ENCODE measurements at regions of chr3 and their contacts with region 1.

Region 1: DNA sequence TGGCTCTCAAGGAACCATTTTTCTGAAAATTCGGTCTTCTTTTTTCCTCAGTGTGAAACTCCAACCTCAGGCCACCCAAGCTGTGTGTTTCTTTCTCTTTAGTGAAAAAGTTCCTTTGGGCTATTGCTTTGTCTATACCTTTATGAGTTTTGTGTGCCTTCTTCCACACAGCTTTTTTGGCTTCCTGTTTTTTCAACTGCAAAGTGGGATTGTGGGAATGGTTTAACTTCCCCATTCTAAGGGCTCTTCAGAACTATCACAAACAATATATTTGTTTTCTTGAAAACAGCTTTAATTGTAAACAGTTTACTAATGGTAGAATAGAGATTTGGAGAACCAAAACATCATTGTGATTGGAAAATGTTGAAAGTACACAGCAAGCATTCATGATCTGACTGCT is 10.4 kb downstream of the SYN2 start:
- DNase-seq: no peak
- ATAC-seq: no peak
- H3K4me3 ChIP-seq: no peak overlapping the region
- H3K4me3 Mint-ChIP-seq: no peak overlapping the region
- H3K27ac ChIP-seq: no peak overlapping the region
- H3K27ac Mint-ChIP-seq: no peak overlapping the region
- H3K4me1 ChIP-seq: no peaks in the 10 kb centered on the region
- H3K4me1 Mint-ChIP-seq: no peaks in the 10 kb centered on the region
- H3K27me3 ChIP-seq: peaks cover 0 to 4% of the 10 kb centered on the region in 2 experiments
- H3K27me3 Mint-ChIP-seq: peaks cover 0 to 5% of the 10 kb centered on the region in 2 donors

Region 2: GRCh38 chr3:12750223-12750622 is 735.6 kb after region 1 on chr3:
- CTCF ChIA-PET with region 1: no interaction called
- POLR2A ChIA-PET with region 1: interaction called in 1 of 2 experiments, 11 read pairs
- DNase-seq: no peak
- ATAC-seq: peak in 1 of 4 experiments; percentile 40
- H3K4me3 ChIP-seq: no peak overlapping the region
- H3K4me3 Mint-ChIP-seq: no peak overlapping the region
- H3K27ac ChIP-seq: no peak overlapping the region
- H3K27ac Mint-ChIP-seq: no peak overlapping the region
- H3K4me1 ChIP-seq: no peaks in the 10 kb centered on the region
- H3K4me1 Mint-ChIP-seq: peaks cover 0 to 7% (median 0%) of the 10 kb centered on the region in 3 donors
- H3K27me3 ChIP-seq: peaks cover 0 to 13% of the 10 kb centered on the region in 2 experiments
- H3K27me3 Mint-ChIP-seq: peaks cover 0 to 7% of the 10 kb centered on the region in 2 donors